ENCODE measurements at regions of chr10 and their contacts with region 1.

Region 1: DNA sequence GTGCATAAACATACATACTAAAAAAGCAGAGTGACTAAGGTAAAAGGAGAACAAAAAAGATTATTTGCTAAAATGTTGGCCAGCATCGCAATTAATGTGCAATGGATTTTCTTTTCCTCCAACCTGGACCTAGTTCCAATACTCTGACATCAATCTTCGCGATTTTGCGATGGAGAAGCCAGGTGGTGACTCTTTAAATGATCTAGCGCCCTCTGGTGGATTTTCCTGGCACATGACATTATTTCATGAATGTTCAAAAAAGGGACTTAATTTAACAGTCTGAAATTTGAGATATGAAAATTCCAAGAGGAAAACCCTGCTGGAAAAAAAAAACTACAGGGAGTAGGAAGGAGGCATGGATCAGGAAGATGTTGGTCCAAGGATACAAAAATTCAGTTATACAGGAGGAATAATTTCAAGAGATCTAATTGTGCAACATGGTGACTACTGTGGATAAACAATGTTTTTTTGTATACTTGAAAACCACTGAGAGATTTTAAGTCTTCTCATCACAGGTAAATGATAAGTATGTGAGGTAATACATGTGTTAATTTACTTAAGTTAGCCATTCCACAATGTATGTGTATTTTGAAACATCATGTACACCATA is 4.3 kb upstream of the KCNMA1 start:
- DNase-seq: peak; percentile 81
- H3K4me3 ChIP-seq: no peak overlapping the region
- H3K27ac ChIP-seq: peak overlapping the region in 2 of 4 donors; percentile 19 to 93
- H3K4me1 ChIP-seq: peaks cover 0 to 36% (median 33%) of the 10 kb centered on the region in 4 donors
- H3K27me3 ChIP-seq: peaks cover 0 to 5% (median 0%) of the 10 kb centered on the region in 3 donors
- CTCF ChIP-seq: peak; percentile 79 to 89 (median 80)
- EP300 ChIP-seq: no peak
- POLR2A ChIP-seq: no peak

Region 2: GRCh38 chr10:77165445-77166208 is 476.3 kb before region 1 on chr10:
- intact Hi-C with region 1: loop called (anchors 2 kb)
- DNase-seq: peak; percentile 69
- H3K4me3 ChIP-seq: no peak overlapping the region
- H3K27ac ChIP-seq: peak overlapping the region in 2 of 4 donors; percentile 61 to 64
- H3K4me1 ChIP-seq: peaks cover 0 to 34% (median 7%) of the 10 kb centered on the region in 4 donors
- H3K27me3 ChIP-seq: no peaks in the 10 kb centered on the region
- CTCF ChIP-seq: peak; percentile 66 to 80 (median 76)
- EP300 ChIP-seq: no peak
- POLR2A ChIP-seq: no peak

Region 3: DNA sequence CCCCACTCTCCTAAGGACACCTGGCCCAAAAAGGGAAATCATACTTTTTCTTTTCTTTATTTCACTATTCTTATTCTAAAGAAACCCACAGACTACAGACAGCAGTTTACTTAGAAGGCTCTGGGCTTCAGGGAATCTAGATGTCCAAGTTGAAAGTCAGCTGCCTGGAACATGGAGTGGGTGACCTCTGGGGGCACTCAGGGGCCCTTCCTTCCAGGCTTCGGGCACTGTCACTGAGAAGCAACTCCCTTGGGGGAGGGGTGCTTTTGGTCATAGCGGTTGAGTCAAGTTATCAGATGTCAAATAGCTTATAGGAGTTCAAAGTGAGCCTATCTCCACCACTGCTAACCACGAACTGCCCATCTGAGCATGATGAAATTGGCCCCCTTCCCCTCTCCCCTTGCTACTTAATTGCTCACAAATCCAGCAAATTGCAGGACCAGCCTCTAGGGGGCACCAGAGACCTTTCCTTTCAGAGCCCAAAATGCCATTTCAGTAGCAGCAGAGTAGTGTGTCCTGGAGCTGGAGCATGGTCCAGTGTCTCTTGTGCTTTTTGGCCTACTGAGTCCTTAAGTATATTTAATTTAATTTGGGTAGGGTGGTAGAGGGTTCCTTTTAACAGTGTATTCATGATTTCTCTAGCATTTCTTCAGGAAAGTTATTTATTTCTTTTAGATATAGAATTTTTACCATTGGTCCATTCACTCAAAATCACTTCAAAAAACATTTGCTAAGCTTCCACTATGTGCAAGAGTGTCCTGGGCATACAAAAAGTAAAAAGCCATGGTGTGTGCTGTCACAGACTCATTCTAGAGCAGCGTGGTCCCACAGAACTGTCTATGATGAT is 468.1 kb before region 1 on chr10:
- intact Hi-C with region 1: loop called (anchors 2 kb)
- DNase-seq: peak; percentile 86
- H3K4me3 ChIP-seq: no peak overlapping the region
- H3K27ac ChIP-seq: peak overlapping the region; percentile 46 to 84 (median 76)
- H3K4me1 ChIP-seq: peaks cover 0 to 47% (median 46%) of the 10 kb centered on the region in 4 donors
- H3K27me3 ChIP-seq: no peaks in the 10 kb centered on the region
- CTCF ChIP-seq: peak; percentile 82 to 92 (median 86)
- EP300 ChIP-seq: no peak
- POLR2A ChIP-seq: no peak

Region 4: GRCh38 chr10:77247031-77247990 is 394.6 kb before region 1 on chr10:
- intact Hi-C with region 1: loop called (anchors 5 kb)
- DNase-seq: no peak
- H3K4me3 ChIP-seq: no peak overlapping the region
- H3K27ac ChIP-seq: peak overlapping the region; percentile 78 to 91 (median 86)
- H3K4me1 ChIP-seq: peaks cover 0 to 97% (median 76%) of the 10 kb centered on the region in 4 donors
- H3K27me3 ChIP-seq: no peaks in the 10 kb centered on the region
- CTCF ChIP-seq: no peak
- EP300 ChIP-seq: peak in 1 of 4 donors; percentile 32
- POLR2A ChIP-seq: no peak

Region 5: GRCh38 chr10:77391605-77392235 is 250.2 kb before region 1 on chr10:
- intact Hi-C with region 1: loop called (anchors 2 kb)
- DNase-seq: peak; percentile 92
- H3K4me3 ChIP-seq: no peak overlapping the region
- H3K27ac ChIP-seq: peak overlapping the region; percentile 61 to 87 (median 78)
- H3K4me1 ChIP-seq: peaks cover 0 to 87% (median 82%) of the 10 kb centered on the region in 4 donors
- H3K27me3 ChIP-seq: no peaks in the 10 kb centered on the region
- CTCF ChIP-seq: peak; percentile 53 to 72 (median 67)
- EP300 ChIP-seq: no peak
- POLR2A ChIP-seq: no peak

Region 6: GRCh38 chr10:77555591-77556212 is 86.2 kb before region 1 on chr10:
- intact Hi-C with region 1: loop called (anchors 5 kb)
- DNase-seq: no peak
- H3K4me3 ChIP-seq: no peak overlapping the region
- H3K27ac ChIP-seq: peak overlapping the region; percentile 66 to 86 (median 81)
- H3K4me1 ChIP-seq: peaks cover 0 to 87% (median 71%) of the 10 kb centered on the region in 4 donors
- H3K27me3 ChIP-seq: no peaks in the 10 kb centered on the region
- CTCF ChIP-seq: no peak
- EP300 ChIP-seq: peak; percentile 42 to 89 (median 68)
- POLR2A ChIP-seq: no peak

Region 7: DNA sequence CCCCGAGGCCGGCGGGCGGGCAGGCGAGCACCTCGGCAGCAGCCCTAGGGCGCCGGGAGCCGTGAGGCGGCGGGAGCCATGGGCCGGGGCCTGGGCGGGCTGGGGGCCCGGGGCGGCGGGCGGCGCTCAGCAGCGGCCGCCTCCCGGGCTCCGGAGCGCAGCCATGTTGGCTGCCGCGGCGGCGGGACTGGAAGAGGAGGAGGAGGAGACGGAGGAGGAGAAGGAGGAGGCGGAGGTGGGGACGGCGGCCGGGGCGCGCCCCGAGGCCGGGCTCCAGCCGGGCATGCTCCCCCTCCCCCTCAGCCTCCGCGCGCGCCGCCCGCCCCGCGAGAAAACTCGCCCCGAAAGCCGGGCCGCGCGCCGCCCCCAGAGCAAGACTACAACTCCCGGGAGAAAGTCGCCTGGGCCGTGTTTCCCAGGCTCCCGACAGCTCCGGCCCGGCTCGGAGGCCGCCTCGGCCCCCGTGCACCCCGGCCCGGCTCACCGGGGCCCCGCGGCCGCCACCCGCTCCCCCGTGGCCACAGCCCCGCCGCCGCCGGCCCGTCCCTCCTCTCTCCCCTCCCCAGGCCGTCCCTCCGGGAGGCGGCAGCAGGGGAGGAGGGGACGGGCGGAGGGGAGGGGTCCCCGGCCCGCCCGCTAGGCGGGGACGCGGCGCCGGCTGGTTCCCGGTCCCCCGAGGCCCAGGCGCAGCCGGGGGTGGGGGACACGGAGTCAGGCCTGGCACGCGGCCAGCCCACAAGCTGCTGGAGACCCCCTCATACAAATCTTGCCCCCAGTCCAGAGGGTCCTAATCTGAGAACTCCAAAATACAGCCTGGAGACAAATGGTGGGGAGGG is 284.9 kb after region 1 on chr10 and contains the start of gene DLG5:
- intact Hi-C with region 1: no loop called
- DNase-seq: peak; percentile 92
- H3K4me3 ChIP-seq: peak within 1 kb of the TSS; percentile 64 to 87 (median 74)
- H3K27ac ChIP-seq: peak within 1 kb of the TSS; percentile 88 to 95 (median 91)
- H3K4me1 ChIP-seq: peaks cover 0 to 54% (median 42%) of the 10 kb centered on the region in 4 donors
- H3K27me3 ChIP-seq: no peaks in the 10 kb centered on the region
- CTCF ChIP-seq: no peak
- EP300 ChIP-seq: no peak
- POLR2A ChIP-seq: no peak
- total RNA-seq, gene DLG5: 41.0 to 78.1 (median 49.4) TPM

Region 8: DNA sequence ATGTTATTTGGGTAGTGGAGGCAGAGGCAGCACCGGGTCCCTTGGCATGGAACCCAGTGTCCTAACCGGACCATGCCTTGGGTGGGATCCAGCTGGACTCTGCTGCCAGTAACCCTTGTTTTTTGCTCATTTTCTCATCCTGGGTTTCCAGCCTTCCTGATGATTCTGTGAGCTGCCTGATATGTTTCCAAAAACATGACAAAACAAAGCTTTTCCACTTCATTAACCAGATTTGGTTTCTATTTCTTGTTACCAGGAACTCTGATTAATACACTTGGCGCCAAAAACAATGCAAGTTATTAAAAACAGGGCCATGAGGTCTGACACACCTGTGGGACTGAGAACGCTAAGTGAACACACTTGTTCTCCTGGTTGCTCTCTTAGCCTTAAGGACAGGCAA is 317.5 kb after region 1 on chr10:
- intact Hi-C with region 1: no loop called
- DNase-seq: no peak
- H3K4me3 ChIP-seq: no peak overlapping the region
- H3K27ac ChIP-seq: peak overlapping the region in 1 of 4 donors; percentile 63
- H3K4me1 ChIP-seq: no peaks in the 10 kb centered on the region
- H3K27me3 ChIP-seq: no peaks in the 10 kb centered on the region
- CTCF ChIP-seq: no peak
- EP300 ChIP-seq: no peak
- POLR2A ChIP-seq: no peak